Heart right ventricle (tissue), 16 donors: ENCODE measurements at regions of chr17 and their contacts with region 1.

Region 1: GRCh38 chr17:19992803-19993713 is 15.4 kb upstream of the AKAP10 start:
- DNase-seq: peak; percentile 85 to 87
- ATAC-seq: peak; percentile 96 to 99 (median 98)
- H3K4me3 ChIP-seq: peak overlapping the region in 1 of 10 donors; percentile 11
- H3K27ac ChIP-seq: no peak overlapping the region
- H3K4me1 ChIP-seq: peaks cover 0 to 6% (median 4%) of the 10 kb centered on the region in 9 donors
- H3K27me3 ChIP-seq: peaks cover 0 to 5% (median 0%) of the 10 kb centered on the region in 7 donors
- CTCF ChIP-seq: peak; percentile 48 to 84 (median 79)

Region 2: DNA sequence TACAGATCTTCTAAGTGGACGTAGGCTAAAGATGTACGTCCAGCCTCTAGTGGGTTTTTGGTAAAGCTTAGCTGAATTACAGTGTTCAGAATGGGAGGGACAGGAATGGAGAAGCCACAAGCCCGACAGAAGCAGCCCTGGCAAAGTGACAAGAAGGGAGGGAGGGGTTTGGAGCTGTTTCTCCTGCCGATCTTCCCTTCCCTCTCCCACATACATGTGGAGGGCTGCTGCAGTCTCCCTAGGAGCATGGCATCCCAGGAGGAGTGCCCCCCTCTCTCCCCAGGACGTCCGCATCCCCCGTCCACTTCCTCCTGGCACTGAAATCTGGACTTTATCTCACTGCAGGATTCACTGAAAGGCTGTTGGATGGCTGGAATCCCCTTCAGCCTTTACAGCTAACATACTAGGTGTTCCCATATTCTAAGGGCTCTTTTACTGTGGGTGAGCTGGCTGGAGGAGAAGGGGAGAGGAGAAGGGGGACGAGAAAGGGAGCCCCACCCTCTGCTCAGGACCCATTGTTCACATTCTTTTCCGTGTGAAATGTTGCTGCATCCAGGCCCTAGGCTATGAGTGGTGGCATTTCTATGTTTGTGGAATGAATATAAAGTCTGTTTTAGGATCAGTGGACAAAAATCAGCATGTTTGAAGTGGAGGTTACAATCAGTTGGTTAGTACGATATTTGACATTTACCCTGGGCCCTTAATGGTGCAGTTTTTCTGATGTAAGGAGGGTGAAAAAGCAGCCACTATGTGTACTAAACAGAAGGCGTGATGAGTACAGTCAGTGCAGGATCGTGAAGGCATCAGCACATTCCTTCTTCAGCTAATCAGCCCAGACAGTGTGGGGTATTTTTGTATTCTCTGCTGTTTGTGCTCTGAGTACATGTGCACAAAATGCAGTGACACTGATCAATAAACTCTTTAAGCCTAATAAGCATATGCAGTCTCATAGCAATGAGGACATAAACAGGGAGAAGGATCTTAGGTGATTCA is 110.7 kb after region 1 on chr17:
- intact Hi-C with region 1: loop called in 1 of 10 experiments (anchors 5 kb)
- DNase-seq: peak in 1 of 2 donors; percentile 43
- ATAC-seq: peak in 6 of 8 donors; percentile 34 to 71 (median 45)
- H3K4me3 ChIP-seq: no peak overlapping the region
- H3K27ac ChIP-seq: peak overlapping the region in 4 of 10 donors; percentile 13 to 37 (median 28)
- H3K4me1 ChIP-seq: peaks cover 0 to 16% (median 11%) of the 10 kb centered on the region in 9 donors
- H3K27me3 ChIP-seq: peaks cover 0 to 17% (median 3%) of the 10 kb centered on the region in 7 donors
- CTCF ChIP-seq: no peak

Region 3: DNA sequence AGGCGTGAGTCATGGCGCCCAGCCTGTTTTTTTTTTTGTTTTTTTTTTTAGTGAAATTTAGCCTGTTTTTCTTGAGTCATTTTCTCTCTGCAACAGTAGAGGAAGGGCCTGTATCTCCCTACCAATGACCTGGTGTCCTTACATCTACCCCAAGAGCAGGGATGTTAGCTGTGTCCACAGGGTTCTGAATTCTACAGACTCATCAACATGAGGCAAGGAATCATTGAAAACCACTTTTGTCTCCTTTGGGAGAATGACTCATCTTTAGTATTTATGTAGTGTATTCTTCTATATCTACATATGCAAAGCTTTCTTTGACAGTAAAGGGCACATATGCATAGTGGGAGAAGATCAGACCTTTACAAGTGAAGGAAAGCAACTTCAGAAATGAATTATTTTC is 121.4 kb after region 1 on chr17:
- intact Hi-C with region 1: loop called in 9 of 10 experiments (anchors 1 to 5 kb)
- DNase-seq: no peak
- ATAC-seq: no peak
- H3K4me3 ChIP-seq: no peak overlapping the region
- H3K27ac ChIP-seq: no peak overlapping the region
- H3K4me1 ChIP-seq: peaks cover 0 to 5% (median 0%) of the 10 kb centered on the region in 9 donors
- H3K27me3 ChIP-seq: no peaks in the 10 kb centered on the region
- CTCF ChIP-seq: no peak

Region 4: GRCh38 chr17:20121359-20122253 is 128.5 kb after region 1 on chr17:
- intact Hi-C with region 1: loop called in 8 of 10 experiments (anchors 1 to 5 kb)
- DNase-seq: peak; percentile 47 to 61
- ATAC-seq: peak in 7 of 8 donors; percentile 27 to 78 (median 68)
- H3K4me3 ChIP-seq: no peak overlapping the region
- H3K27ac ChIP-seq: peak overlapping the region in 1 of 10 donors; percentile 18
- H3K4me1 ChIP-seq: peaks cover 0 to 24% (median 10%) of the 10 kb centered on the region in 9 donors
- H3K27me3 ChIP-seq: peaks cover 0 to 7% (median 0%) of the 10 kb centered on the region in 7 donors
- CTCF ChIP-seq: peak; percentile 65 to 94 (median 88)

Region 5: DNA sequence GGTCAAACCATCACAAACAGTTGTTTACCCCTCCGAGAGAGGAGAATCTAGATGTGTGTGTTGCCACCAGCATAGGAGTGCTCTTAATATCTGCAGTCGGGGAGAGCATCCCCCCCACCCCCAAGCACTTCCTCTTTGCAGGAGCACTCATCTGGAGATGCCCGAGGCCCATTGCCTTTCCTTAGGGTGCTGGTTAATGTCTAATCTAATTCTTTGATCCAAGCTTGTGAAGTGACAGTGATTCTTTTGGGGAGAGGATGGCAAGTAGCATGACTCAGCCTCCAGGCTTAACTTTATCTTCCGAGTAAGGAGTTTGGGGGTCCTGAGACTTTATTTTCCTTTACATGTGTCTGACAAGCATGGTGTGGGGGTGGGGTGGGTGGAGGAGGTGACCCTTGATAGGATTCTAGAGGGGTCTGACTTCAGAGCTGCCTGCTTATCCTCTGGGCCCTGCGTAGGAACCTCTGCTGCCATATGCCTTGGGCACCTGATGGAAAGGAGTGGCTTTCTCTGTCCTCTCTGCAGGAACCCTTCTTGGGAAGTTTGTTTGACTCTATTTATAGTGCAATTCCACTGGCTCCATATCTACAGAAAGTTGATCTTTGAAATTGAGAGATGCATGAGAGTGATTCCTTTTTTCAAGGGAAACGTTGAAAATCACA is 223.2 kb after region 1 on chr17:
- intact Hi-C with region 1: loop called in 1 of 10 experiments (anchors 10 kb)
- DNase-seq: no peak
- ATAC-seq: no peak
- H3K4me3 ChIP-seq: no peak overlapping the region
- H3K27ac ChIP-seq: no peak overlapping the region
- H3K4me1 ChIP-seq: no peaks in the 10 kb centered on the region
- H3K27me3 ChIP-seq: no peaks in the 10 kb centered on the region
- CTCF ChIP-seq: no peak

Region 6: DNA sequence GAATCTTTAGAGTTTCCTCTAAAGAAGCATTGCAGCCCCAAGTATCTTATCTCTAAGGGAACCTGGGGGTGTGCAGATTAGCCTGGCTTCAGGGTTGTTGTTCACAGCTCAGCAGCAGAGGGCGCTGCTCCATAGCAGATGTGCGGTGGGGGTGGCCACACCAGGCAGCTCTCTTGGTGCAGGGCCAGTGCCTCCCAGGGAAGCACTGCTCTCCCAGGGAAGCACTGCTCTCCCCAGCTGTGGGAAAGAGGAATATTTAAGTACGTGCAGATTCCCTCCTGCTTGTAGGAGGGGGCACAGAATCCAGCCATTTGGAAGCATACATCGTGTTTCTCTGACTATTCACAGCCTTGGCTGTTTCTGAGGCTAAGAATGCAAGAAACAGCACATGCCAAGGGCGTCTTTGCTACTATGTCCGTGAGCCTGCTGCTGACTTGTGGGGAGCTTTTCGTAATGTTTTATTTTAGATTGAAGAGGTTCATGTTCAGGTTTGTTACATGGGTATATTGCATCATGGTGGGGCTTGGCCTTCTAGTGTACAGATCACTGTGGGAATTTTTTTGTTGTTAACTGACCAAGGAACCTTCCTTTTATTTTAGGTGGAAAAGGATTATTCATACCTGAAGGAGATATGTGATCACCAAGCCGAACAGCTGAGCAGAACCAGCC is 233.9 kb after region 1 on chr17:
- intact Hi-C with region 1: loop called in 1 of 10 experiments (anchors 5 kb)
- DNase-seq: peak; percentile 76 to 84
- ATAC-seq: peak; percentile 86 to 98 (median 96)
- H3K4me3 ChIP-seq: no peak overlapping the region
- H3K27ac ChIP-seq: no peak overlapping the region
- H3K4me1 ChIP-seq: peaks cover 0 to 13% (median 0%) of the 10 kb centered on the region in 9 donors
- H3K27me3 ChIP-seq: no peaks in the 10 kb centered on the region
- CTCF ChIP-seq: peak; percentile 56 to 89 (median 81)